Activated B cell treated with CpG ODN at 0.5 μM for 24 hours (primary cell): ENCODE measurements at regions of chr11 and their contacts with region 1.

Region 1: DNA sequence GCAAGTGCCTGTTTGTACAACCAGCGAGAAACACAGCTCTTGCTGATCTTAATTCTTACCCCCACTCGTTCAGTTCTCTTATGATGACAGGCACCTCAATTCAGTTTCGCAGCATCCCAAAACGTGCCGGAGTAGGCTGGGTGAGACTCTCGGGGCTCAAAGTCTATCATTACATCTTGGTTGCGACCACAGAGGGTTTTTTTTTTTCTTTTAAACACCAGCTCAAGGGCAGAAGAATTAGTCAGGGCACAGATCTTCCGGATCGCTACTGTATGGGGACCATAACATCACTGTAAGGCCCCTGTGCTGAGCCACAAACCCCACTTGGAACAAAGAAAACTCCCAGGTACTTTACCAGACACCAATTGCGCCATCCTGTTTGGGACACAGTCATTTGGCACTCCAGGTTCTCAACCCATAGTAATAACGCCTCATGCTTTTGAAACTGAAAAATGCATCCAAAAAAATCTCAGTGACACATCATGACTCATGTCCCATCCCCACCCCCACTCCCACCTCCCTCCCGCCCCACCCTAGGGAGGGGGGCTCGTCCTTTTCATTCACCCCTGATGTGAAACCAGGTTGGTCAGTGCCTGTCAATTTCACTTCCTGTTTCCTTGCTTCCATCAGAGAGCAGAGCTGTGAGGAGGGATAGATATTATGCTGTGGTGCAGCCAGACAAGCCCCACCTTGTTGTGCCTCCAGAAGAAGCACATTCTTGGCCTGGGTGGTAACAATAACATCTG is 41.0 kb upstream of the CD5 start:
- DNase-seq: peak; percentile 45
- ATAC-seq: peak; percentile 88
- H3K4me3 Mint-ChIP-seq: peak overlapping the region; percentile 75
- H3K27ac Mint-ChIP-seq: peak overlapping the region; percentile 95
- H3K4me1 Mint-ChIP-seq: peaks cover 40% of the 10 kb centered on the region
- H3K27me3 Mint-ChIP-seq: no peaks in the 10 kb centered on the region
- CTCF ChIP-seq: no peak

Region 2: GRCh38 chr11:60932605-60933356 is 128.5 kb before region 1 on chr11:
- CTCF ChIA-PET with region 1: no interaction called
- POLR2A ChIA-PET with region 1: interaction called, 14 read pairs
- intact Hi-C with region 1: no loop called
- DNase-seq: no peak
- ATAC-seq: peak; percentile 57
- H3K4me3 Mint-ChIP-seq: peak overlapping the region; percentile 66
- H3K27ac Mint-ChIP-seq: peak overlapping the region; percentile 89
- H3K4me1 Mint-ChIP-seq: peaks cover 48% of the 10 kb centered on the region
- H3K27me3 Mint-ChIP-seq: no peaks in the 10 kb centered on the region
- CTCF ChIP-seq: no peak

Region 3: DNA sequence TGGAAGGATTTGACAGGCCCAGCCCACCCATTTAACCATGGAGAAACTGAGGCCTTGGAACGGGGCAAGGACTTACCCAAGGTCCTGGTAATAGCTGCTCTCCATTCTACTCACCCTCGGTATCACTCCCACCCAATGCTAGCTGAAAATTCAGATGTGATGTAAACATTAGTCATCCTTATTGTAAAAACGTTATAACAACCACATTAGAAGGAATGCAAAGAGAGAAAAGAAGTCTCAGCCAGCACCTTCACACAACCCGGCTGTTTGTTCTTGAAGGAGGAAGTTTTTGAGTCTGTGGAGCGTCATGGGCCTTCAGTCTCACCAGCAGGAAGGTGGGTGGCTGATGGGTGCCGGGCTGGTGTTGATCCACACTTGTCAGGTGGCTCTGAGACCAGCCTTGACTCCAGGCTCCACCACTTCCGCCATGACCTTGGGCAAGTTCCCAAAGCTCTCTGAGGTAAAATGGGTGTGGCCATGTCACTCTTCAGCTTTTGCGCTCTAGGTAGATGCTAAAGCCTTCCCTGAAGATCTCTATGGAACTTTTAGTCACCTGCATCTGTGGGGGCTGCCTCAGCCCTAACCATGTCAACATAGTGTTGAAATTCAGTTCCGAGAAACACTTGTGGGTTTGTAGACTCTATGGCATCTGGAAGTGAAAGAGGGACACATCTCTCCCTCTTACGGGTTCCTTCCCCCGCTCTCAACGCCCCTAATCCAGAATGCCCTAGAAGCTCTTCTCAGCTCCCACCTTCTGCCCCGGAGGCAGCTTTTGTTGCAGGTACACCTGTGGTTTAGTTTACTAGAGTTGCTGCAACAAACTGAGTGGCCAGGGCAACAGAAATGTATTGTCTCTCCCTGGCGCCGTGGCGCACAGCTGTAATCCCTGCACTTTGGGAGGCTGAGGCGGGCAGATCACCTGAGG is 75.0 kb before region 1 on chr11:
- CTCF ChIA-PET with region 1: no interaction called
- POLR2A ChIA-PET with region 1: interaction called, 6 read pairs
- intact Hi-C with region 1: loop called (anchors 2 kb)
- DNase-seq: no peak
- ATAC-seq: peak; percentile 47
- H3K4me3 Mint-ChIP-seq: peak overlapping the region; percentile 24
- H3K27ac Mint-ChIP-seq: peak overlapping the region; percentile 79
- H3K4me1 Mint-ChIP-seq: peaks cover 53% of the 10 kb centered on the region
- H3K27me3 Mint-ChIP-seq: no peaks in the 10 kb centered on the region
- CTCF ChIP-seq: no peak

Region 4: GRCh38 chr11:61028272-61028761 is 32.9 kb before region 1 on chr11:
- CTCF ChIA-PET with region 1: no interaction called
- POLR2A ChIA-PET with region 1: interaction called, 11 read pairs
- intact Hi-C with region 1: loop called (anchors 1 kb)
- DNase-seq: no peak
- ATAC-seq: peak; percentile 91
- H3K4me3 Mint-ChIP-seq: peak overlapping the region; percentile 54
- H3K27ac Mint-ChIP-seq: peak overlapping the region; percentile 86
- H3K4me1 Mint-ChIP-seq: peaks cover 49% of the 10 kb centered on the region
- H3K27me3 Mint-ChIP-seq: no peaks in the 10 kb centered on the region
- CTCF ChIP-seq: no peak

Region 5: GRCh38 chr11:61091373-61092279 is 30.4 kb after region 1 on chr11:
- CTCF ChIA-PET with region 1: no interaction called
- POLR2A ChIA-PET with region 1: interaction called, 14 read pairs
- intact Hi-C with region 1: loop called (anchors 2 kb)
- DNase-seq: no peak
- ATAC-seq: peak; percentile 14
- H3K4me3 Mint-ChIP-seq: peak overlapping the region; percentile 77
- H3K27ac Mint-ChIP-seq: peak overlapping the region; percentile 86
- H3K4me1 Mint-ChIP-seq: peaks cover 78% of the 10 kb centered on the region
- H3K27me3 Mint-ChIP-seq: no peaks in the 10 kb centered on the region
- CTCF ChIP-seq: no peak

Region 6: GRCh38 chr11:61129639-61130523 is 68.6 kb after region 1 on chr11:
- CTCF ChIA-PET with region 1: interaction called, 4 read pairs
- POLR2A ChIA-PET with region 1: no interaction called
- intact Hi-C with region 1: loop called (anchors 1 kb)
- DNase-seq: peak; percentile 82
- ATAC-seq: peak; percentile 100
- H3K4me3 Mint-ChIP-seq: no peak overlapping the region
- H3K27ac Mint-ChIP-seq: peak overlapping the region; percentile 6
- H3K4me1 Mint-ChIP-seq: peaks cover 8% of the 10 kb centered on the region
- H3K27me3 Mint-ChIP-seq: no peaks in the 10 kb centered on the region
- CTCF ChIP-seq: peak; percentile 96

Region 7: DNA sequence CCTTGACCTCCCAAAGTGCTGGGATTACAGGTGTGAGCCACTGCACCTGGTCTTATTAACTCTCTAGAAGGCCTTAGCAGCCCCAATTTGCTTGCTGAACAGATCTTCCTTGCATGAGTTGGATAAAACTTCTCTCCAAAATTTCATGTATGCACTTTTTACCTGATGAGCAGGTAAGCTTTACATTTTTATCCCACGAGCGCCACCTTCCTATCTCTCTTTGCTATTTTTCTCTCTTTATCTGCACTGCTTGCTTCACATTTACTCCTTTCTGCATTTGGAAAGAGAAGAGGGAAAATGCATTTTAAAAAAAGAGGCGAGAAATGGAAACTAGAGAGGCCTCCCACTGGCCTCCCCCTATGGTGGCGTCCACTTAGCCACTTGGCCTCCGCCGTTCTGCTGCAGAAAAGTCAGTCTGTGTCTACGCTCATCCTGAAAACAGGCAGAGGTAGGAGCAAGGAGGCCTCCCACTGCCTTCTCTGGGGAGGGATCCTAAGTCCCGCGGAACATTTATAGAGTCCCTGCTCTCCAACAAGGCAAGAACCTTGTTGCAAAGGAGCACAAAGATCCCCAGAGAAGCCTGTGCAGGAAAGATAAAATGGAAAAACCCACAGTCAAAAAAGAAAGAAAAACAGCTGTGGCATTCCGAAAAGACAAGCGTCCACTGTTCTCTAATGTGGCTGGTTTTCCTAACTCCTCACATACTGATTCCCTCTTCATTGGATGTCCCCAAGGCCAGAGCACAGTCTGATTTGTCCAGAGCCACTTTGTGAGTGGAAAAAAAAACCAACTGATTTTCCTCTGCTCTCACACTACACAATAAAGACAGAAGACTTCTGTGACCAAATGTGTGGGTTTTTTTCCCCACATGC is 1000.3 kb after region 1 on chr11:
- CTCF ChIA-PET with region 1: no interaction called
- POLR2A ChIA-PET with region 1: no interaction called
- intact Hi-C with region 1: no loop called
- DNase-seq: no peak
- ATAC-seq: no peak
- H3K4me3 Mint-ChIP-seq: no peak overlapping the region
- H3K27ac Mint-ChIP-seq: no peak overlapping the region
- H3K4me1 Mint-ChIP-seq: no peaks in the 10 kb centered on the region
- H3K27me3 Mint-ChIP-seq: peaks cover 3% of the 10 kb centered on the region
- CTCF ChIP-seq: no peak